ENCODE measurements at regions of chr15 and their contacts with region 1.

Region 1: DNA sequence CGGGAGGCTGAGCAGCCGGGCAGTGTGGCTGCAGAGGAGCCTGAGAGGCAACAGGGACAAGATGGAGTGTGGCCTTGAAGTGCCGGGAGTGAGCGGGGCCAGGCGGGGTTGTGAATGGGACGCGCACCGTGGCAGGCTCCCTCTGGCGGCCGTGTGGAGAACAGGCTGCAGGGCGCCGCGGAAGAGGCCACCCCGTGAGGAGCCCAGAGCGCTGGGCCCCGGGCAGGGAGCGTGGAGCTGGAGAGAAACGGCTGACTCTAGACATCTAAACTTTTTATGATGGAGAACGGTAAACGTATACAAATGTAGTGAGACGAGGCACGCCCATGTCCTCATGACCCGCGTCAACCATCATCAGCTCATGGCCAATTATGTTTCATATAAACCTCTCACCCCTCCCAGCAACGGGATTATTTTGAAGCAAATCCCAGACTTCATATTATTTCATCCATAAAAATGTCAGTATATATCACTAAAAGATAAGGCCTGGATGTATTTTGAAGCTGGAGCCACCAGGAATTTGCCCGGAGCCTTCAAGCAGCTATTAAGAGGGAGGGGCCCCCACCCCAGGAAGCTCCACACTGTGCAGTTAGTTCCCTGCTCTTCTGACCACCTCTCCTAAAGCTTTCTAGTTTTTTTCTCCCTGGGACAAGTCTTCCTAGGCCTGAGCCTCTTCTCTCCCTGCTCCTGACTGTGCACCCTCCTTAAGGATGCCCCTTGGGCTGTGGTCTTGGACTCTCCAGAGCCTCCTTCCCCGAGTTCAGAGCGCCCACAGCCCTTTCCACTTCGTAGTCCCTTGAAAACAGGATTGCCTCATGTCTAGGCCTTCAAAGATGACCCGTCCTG is 149.4 kb downstream of the SMAD6 start:
- DNase-seq: peak; percentile 91

Region 2: GRCh38 chr15:66603301-66604179 is 247.9 kb before region 1 on chr15:
- intact Hi-C with region 1: loop called (anchors 2 kb)
- DNase-seq: peak; percentile 87

Region 3: DNA sequence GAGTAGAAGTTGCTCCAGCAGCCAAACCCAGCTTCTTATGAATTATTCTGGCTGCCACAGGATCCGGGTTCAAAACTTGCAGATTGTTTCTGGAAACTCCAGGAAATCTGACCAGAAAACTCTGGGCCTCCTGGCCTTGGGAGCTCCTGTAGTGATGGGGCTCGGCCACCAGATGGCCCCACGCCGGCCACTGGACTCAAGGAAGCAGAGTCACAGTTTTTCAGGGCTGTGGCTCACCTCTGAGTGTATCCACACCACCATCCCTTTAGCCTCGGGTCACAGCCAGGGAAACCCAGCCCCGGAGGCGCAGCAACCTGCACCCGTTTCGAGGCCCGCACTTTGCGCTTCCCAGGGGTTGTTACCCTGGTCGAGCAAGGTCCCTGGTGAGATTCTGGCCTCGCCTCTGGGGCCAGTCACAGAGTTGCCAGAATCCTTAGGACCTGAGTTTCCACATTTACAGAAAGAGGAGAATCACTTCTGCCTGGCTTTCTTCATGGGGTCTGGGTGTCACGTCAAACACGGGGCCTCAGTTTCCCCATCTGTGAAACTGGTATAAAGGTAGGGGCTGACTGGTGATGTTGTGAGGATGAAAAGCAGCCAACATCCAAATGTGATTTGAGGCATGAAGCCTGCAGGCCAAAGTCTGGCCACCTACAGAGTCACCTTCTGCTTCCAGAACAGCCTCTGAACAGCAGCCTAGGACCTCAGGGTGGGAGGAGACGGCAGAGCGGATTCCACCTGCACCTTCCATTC is 232.1 kb before region 1 on chr15:
- intact Hi-C with region 1: loop called (anchors 5 kb)
- DNase-seq: peak; percentile 86

Region 4: GRCh38 chr15:66774001-66774814 is 77.2 kb before region 1 on chr15:
- intact Hi-C with region 1: loop called (anchors 1 kb)
- DNase-seq: peak; percentile 92

Region 5: GRCh38 chr15:66830358-66830757 is 21.1 kb before region 1 on chr15:
- intact Hi-C with region 1: loop called (anchors 2 kb)
- DNase-seq: peak; percentile 84

Region 6: DNA sequence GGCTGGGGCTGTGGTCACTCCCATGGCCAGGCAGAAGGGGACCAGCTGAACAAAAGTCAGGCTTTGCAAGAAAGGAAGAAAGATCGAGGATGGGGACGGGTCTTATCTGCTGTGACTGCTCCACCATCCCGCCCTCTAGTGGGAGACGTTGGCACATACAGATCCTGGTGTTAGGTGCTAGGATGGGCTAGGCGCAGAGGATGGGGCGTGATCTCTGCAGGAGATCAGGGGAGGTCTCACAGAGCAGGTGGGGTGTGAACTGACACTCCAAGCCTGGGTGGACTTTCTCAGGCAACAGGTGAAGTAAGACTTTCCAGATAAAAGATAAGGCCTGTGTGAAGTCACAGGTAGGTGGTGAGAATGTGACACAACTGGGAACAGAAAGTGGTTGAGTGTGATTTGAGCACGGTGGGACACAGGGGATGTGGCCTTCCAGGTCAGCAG is 72.0 kb after region 1 on chr15:
- intact Hi-C with region 1: no loop called
- DNase-seq: peak; percentile 66